Dendritic cell treated with granulocyte-macrophage colony-stimulating factor and Interleukin-4, amounts not matched to agents 40 ng/mL and 50 ng/mL, for 4 days (primary cell): ENCODE measurements at regions of chr15 and their contacts with region 1.

Region 1: GRCh38 chr15:39782441-39783138 is at the start of gene FSIP1:
- H3K4me3 Mint-ChIP-seq: peak within 1 kb of the TSS; percentile 97
- H3K27ac Mint-ChIP-seq: peak within 1 kb of the TSS; percentile 91
- H3K4me1 Mint-ChIP-seq: peaks cover 24% of the 10 kb centered on the region
- H3K27me3 Mint-ChIP-seq: no peaks in the 10 kb centered on the region

Region 2: DNA sequence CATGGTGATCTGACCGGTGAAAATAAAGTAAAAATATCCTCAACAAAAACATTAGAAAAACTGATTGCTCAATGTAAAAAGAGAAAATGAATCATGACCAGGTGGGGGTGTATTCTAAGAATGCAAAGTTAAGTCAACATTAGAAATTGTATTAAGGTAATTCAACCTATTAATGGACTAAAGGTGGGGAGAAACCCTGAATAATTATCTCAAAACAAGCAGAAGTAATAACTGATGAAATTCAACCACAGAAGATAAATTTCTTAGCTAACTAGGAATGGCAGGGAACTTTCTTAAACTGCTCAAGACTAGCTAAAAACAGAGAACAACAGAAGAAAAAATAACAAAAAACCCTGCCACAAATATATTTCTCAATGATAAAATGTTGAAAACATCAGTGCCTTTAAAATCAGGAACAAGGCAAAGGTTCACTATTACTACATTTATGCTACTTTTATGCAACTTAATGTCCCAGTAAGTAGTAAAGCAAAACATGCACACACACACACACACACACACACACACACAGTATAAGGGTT is 406.1 kb before region 1 on chr15:
- intact Hi-C with region 1: no loop called
- H3K4me3 Mint-ChIP-seq: no peak overlapping the region
- H3K27ac Mint-ChIP-seq: no peak overlapping the region
- H3K4me1 Mint-ChIP-seq: peaks cover 27% of the 10 kb centered on the region
- H3K27me3 Mint-ChIP-seq: no peaks in the 10 kb centered on the region

Region 3: DNA sequence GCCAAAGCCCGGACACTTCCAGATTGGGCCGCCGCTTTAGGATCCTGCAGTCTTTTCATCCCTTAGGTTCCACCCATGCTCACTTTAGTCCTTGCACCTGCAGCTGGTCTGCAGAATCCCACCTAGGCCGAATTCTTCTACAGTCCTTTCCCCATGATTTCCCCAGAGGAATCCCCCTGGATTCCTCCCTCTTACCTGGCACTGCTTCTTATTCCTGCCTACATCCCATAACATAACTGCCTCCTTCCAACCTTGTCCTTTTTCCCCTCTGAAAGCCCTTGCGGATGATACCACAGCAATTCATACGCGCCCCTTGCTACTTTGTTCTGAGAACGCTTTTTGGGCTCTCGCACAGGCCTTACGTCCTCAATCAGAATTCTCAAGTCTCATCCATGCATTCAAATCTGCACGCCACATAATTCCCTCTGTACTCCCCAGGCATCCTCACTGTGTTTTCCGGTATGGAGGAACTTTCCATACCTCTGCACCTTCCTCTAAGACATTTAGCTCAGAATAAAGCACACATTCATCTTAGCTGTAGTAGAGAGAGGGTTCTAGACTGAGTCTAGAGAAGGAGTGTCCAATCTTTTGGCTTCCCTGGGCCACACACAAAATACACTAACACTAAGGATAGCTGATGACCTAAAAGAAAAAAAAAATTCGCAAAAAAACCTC is 151.9 kb after region 1 on chr15:
- intact Hi-C with region 1: loop called (anchors 1 kb)
- H3K4me3 Mint-ChIP-seq: peak overlapping the region; percentile 83
- H3K27ac Mint-ChIP-seq: peak overlapping the region; percentile 90
- H3K4me1 Mint-ChIP-seq: peaks cover 55% of the 10 kb centered on the region
- H3K27me3 Mint-ChIP-seq: peaks cover 2% of the 10 kb centered on the region

Region 4: DNA sequence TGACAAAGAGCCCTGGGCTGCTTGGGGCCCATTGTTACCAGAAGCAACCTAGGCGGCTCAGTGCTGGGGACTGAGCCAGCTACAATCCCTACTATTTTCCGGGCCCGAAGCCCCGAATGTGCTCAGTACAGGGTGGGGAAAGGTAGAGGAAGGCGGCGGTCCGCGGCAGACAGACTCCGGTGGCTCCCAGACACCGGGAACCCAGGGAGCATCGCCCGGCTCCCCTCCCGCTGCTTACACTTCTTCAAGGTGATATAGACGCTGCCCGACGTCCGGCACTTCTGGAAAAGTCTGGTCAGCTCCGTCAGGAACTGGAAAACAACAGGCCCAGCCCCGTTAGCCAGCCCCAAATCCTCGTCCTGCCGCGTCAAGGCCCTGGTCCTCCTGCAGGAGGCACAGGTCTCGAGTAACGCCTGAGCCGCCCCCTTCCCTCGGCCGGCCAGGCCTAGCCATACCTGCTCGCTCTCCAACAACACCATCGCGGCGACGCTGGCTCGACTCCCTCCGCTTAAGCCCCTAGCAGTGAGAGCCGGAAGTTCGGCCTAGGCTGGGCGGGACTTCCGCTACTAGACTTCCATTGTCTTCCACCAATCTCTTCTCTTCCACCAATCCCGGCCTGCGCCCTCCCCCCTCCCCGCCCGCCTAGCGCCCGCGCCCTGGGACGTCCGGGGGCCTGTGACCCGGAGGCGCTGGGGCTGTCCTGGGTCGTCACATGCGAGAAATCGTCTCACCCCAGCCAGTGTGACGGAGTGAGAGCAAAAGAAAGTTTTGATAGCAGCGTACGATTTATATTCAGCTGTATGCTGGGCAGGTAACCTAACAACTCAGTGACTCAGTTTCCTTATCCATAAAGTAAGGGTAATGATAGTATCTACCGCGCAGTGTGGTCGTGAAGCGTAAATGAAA is 256.3 kb after region 1 on chr15 and contains the start of gene SRP14:
- intact Hi-C with region 1: loop called (anchors 10 kb)
- H3K4me3 Mint-ChIP-seq: peak within 1 kb of the TSS; percentile 97
- H3K27ac Mint-ChIP-seq: peak within 1 kb of the TSS; percentile 99
- H3K4me1 Mint-ChIP-seq: peaks cover 29% of the 10 kb centered on the region
- H3K27me3 Mint-ChIP-seq: no peaks in the 10 kb centered on the region